ENCODE measurements at regions of chr5 and their contacts with region 1.

Region 1: GRCh38 chr5:150458819-150459557 is 9.4 kb upstream of the RPS14 start:
- DNase-seq: peak; percentile 81 to 85 (median 83)
- ATAC-seq: peak; percentile 92 to 95 (median 94)
- H3K4me3 ChIP-seq: no peak overlapping the region
- H3K27ac ChIP-seq: peak overlapping the region in 2 of 3 donors; percentile 22 to 24
- H3K4me1 ChIP-seq: peaks cover 0 to 14% (median 2%) of the 10 kb centered on the region in 4 donors
- H3K27me3 ChIP-seq: no peaks in the 10 kb centered on the region
- CTCF ChIP-seq: peak; percentile 74 to 81 (median 78)
- POLR2A ChIP-seq: no peak

Region 2: GRCh38 chr5:150538007-150538917 is 79.3 kb after region 1 on chr5:
- intact Hi-C with region 1: loop called in 1 of 2 experiments (anchors 5 kb)
- DNase-seq: peak in 1 of 3 donors; percentile 40
- ATAC-seq: no peak
- H3K4me3 ChIP-seq: no peak overlapping the region
- H3K27ac ChIP-seq: peak overlapping the region; percentile 6 to 95 (median 94)
- H3K4me1 ChIP-seq: peaks cover 0 to 45% (median 26%) of the 10 kb centered on the region in 4 donors
- H3K27me3 ChIP-seq: no peaks in the 10 kb centered on the region
- CTCF ChIP-seq: no peak
- POLR2A ChIP-seq: no peak

Measured in right lobe of liver (tissue), 6 donors.